Activated CD4-positive, alpha-beta T cell treated with anti-CD3 and anti-CD28 coated beads, Interleukin-2, amount 10 ng/mL, durations not matched to agents 7 days and 5 days (primary cell): ENCODE measurements at regions of chr9 and their contacts with region 1.

Region 1: DNA sequence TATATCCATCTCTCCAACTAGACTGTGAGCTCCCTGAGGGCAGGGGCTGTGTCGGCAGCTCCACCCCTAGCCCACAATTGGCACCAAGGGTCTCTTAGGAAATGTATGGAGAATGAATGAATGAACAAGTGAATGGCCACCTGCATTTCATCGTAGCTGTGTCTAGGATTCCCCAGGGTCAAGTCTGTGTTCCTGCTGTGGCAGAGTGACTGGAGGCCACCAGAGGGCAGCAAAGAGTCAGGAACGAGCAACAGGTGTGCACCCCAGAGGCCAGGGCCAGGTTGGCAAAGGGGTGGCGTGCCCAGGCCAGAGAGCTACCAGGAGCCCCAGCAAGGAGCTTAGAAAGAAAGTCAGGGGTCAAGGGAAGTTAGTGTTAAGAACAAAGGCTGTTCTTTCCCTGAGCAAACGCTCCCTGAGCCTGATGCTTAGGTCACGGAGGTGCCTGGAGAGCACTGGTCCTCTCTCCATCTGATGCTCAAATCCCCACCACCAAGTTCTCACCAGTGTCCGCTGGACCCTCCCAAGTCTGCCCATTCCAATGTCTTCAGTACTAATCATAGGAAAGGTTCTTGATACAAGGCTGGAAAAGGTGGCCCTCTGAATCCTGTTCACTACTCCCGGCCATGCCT is 160.7 kb downstream of the PAX5 start:
- DNase-seq: peak; percentile 76
- H3K4me3 Mint-ChIP-seq: no peak overlapping the region
- H3K27ac Mint-ChIP-seq: no peak overlapping the region
- H3K4me1 Mint-ChIP-seq: no peaks in the 10 kb centered on the region
- H3K27me3 Mint-ChIP-seq: peaks cover 3% of the 10 kb centered on the region

Region 2: GRCh38 chr9:36855448-36856315 is 17.7 kb before region 1 on chr9:
- CTCF ChIA-PET with region 1: interaction called, 22 read pairs
- POLR2A ChIA-PET with region 1: no interaction called
- DNase-seq: peak; percentile 54
- H3K4me3 Mint-ChIP-seq: no peak overlapping the region
- H3K27ac Mint-ChIP-seq: peak overlapping the region; percentile 22
- H3K4me1 Mint-ChIP-seq: peaks cover 11% of the 10 kb centered on the region
- H3K27me3 Mint-ChIP-seq: no peaks in the 10 kb centered on the region

Region 3: GRCh38 chr9:36974731-36975130 is 101.4 kb after region 1 on chr9:
- CTCF ChIA-PET with region 1: interaction called, 11 read pairs
- POLR2A ChIA-PET with region 1: no interaction called
- DNase-seq: no peak
- H3K4me3 Mint-ChIP-seq: no peak overlapping the region
- H3K27ac Mint-ChIP-seq: no peak overlapping the region
- H3K4me1 Mint-ChIP-seq: no peaks in the 10 kb centered on the region
- H3K27me3 Mint-ChIP-seq: peaks cover 9% of the 10 kb centered on the region